Endothelial cell of umbilical vein (primary cell): ENCODE measurements at regions of chr7 and their contacts with region 1.

Region 1: DNA sequence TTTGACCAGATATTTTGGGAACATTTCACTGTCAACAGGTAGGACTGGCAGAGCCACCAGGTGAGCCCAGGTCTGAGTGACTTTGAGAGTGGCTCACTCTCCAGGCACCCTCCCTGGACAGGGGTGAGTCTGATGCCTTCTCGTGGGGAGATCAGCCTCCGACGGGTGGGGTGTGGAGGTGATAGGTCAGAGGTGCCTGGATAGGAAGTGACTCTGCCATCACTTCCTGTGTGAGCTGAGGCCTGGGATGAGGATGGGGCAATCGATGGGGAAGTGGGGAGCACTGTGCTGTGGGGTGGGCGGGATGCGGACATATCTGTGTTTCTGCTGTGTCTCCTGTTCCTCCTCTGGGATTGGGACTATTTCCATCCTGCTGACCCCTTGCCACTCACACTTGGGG is 34.6 kb downstream of the IFT22 start:
- DNase-seq: no peak
- H3K4me3 ChIP-seq: no peak overlapping the region
- H3K27ac ChIP-seq: no peak overlapping the region
- H3K4me1 ChIP-seq: no peaks in the 10 kb centered on the region
- H3K27me3 ChIP-seq: peaks cover 7 to 9% of the 10 kb centered on the region in 2 experiments
- CTCF ChIP-seq: no peak
- POLR2A ChIP-seq: no peak

Region 2: DNA sequence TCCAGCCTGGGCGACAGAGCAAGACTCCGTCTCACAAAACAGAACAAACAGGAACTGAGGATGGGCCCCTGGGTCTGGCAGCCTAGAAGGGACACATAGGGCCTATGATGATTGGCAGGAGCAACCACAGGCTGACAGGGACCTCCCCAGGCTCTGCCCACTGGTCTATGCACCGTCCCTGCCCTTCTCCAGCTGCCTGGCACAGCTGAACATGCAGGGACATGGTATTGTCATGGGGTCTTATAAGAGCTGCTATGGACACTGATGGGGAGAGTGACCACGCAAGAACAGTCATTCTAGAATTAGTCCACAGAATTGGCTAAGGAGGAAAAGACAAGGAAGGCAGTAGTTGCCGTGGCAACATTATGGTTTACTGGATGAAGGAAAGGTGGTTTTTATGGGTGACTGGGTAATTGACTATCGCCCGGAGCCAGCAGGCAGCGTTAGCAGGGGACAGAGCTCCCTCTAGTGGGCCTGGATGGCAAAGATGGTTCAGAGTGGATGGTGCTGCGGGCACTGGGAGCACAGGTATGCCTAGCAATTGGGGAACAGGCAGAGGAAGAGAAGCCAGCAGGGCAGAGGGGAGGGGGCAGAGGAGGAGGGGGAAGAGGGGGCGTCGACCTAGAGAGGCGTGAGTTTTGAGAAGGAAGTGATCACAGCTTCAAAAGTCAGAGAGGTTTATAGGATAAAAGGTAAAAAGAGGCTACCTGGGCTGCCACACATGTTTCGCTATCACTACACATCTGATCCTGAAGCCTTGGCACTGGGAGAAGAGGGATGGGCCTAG is 209.5 kb before region 1 on chr7:
- CTCF ChIA-PET with region 1: interaction called, 8 read pairs
- POLR2A ChIA-PET with region 1: no interaction called
- dilution Hi-C with region 1: no loop called
- intact Hi-C with region 1: loop called (anchors 5 kb)
- DNase-seq: peak; percentile 70
- H3K4me3 ChIP-seq: no peak overlapping the region
- H3K27ac ChIP-seq: no peak overlapping the region
- H3K4me1 ChIP-seq: no peaks in the 10 kb centered on the region
- H3K27me3 ChIP-seq: peaks cover under 1 to 4% of the 10 kb centered on the region in 2 experiments
- CTCF ChIP-seq: peak; percentile 88 to 94
- POLR2A ChIP-seq: no peak

Region 3: GRCh38 chr7:101173752-101174244 is 113.2 kb before region 1 on chr7:
- CTCF ChIA-PET with region 1: interaction called, 12 read pairs
- POLR2A ChIA-PET with region 1: no interaction called
- dilution Hi-C with region 1: no loop called
- intact Hi-C with region 1: no loop called
- DNase-seq: peak; percentile 26
- H3K4me3 ChIP-seq: no peak overlapping the region
- H3K27ac ChIP-seq: no peak overlapping the region
- H3K4me1 ChIP-seq: no peaks in the 10 kb centered on the region
- H3K27me3 ChIP-seq: peaks cover 80 to 83% of the 10 kb centered on the region in 2 experiments
- CTCF ChIP-seq: no peak
- POLR2A ChIP-seq: no peak

Region 4: GRCh38 chr7:101235050-101235449 is 52.0 kb before region 1 on chr7:
- CTCF ChIA-PET with region 1: interaction called, 18 read pairs
- POLR2A ChIA-PET with region 1: no interaction called
- dilution Hi-C with region 1: no loop called
- intact Hi-C with region 1: loop called (anchors 5 kb)
- DNase-seq: peak; percentile 27
- H3K4me3 ChIP-seq: no peak overlapping the region
- H3K27ac ChIP-seq: no peak overlapping the region
- H3K4me1 ChIP-seq: peaks cover 38% of the 10 kb centered on the region
- H3K27me3 ChIP-seq: no peaks in the 10 kb centered on the region
- CTCF ChIP-seq: peak; percentile 20 to 50
- POLR2A ChIP-seq: no peak

Region 5: GRCh38 chr7:101251871-101252659 is 35.0 kb before region 1 on chr7:
- CTCF ChIA-PET with region 1: interaction called, 18 read pairs
- POLR2A ChIA-PET with region 1: no interaction called
- dilution Hi-C with region 1: no loop called
- intact Hi-C with region 1: no loop called
- DNase-seq: peak; percentile 99
- H3K4me3 ChIP-seq: peak overlapping the region; percentile 67 to 98 (median 89)
- H3K27ac ChIP-seq: peak overlapping the region; percentile 52
- H3K4me1 ChIP-seq: peaks cover 4% of the 10 kb centered on the region
- H3K27me3 ChIP-seq: no peaks in the 10 kb centered on the region
- CTCF ChIP-seq: no peak
- POLR2A ChIP-seq: peak; percentile 76

Region 6: GRCh38 chr7:101315336-101315735 is 28.3 kb after region 1 on chr7:
- CTCF ChIA-PET with region 1: interaction called, 11 read pairs
- POLR2A ChIA-PET with region 1: no interaction called
- dilution Hi-C with region 1: no loop called
- intact Hi-C with region 1: no loop called
- DNase-seq: peak; percentile 37
- H3K4me3 ChIP-seq: no peak overlapping the region
- H3K27ac ChIP-seq: no peak overlapping the region
- H3K4me1 ChIP-seq: no peaks in the 10 kb centered on the region
- H3K27me3 ChIP-seq: no peaks in the 10 kb centered on the region
- CTCF ChIP-seq: peak; percentile 64 to 66
- POLR2A ChIP-seq: no peak

Region 7: DNA sequence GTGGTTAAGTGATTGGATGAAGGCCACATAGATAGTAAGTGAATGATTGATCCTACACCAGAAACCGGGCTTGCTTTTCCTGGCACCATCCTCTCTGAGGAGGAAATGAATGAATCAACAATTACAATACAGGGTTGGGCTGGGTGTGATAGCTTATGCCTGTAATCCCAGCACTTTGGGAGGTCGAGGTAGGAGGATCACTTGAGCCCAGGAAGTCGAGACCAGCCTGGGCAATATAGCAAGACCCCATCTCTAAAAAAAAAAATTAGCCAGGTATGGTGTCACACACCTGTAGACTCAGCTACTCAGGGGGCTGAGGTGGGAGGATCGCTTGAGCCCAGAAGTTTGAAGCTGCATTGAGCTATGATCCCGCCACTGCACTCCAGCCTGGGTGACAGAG is 187.1 kb after region 1 on chr7:
- CTCF ChIA-PET with region 1: no interaction called
- POLR2A ChIA-PET with region 1: no interaction called
- dilution Hi-C with region 1: no loop called
- intact Hi-C with region 1: no loop called
- DNase-seq: no peak
- H3K4me3 ChIP-seq: no peak overlapping the region
- H3K27ac ChIP-seq: no peak overlapping the region
- H3K4me1 ChIP-seq: no peaks in the 10 kb centered on the region
- H3K27me3 ChIP-seq: no peaks in the 10 kb centered on the region
- CTCF ChIP-seq: no peak
- POLR2A ChIP-seq: no peak